OCI-LY7 (cell line): ENCODE measurements at regions of chr10 and their contacts with region 1.

Region 1: DNA sequence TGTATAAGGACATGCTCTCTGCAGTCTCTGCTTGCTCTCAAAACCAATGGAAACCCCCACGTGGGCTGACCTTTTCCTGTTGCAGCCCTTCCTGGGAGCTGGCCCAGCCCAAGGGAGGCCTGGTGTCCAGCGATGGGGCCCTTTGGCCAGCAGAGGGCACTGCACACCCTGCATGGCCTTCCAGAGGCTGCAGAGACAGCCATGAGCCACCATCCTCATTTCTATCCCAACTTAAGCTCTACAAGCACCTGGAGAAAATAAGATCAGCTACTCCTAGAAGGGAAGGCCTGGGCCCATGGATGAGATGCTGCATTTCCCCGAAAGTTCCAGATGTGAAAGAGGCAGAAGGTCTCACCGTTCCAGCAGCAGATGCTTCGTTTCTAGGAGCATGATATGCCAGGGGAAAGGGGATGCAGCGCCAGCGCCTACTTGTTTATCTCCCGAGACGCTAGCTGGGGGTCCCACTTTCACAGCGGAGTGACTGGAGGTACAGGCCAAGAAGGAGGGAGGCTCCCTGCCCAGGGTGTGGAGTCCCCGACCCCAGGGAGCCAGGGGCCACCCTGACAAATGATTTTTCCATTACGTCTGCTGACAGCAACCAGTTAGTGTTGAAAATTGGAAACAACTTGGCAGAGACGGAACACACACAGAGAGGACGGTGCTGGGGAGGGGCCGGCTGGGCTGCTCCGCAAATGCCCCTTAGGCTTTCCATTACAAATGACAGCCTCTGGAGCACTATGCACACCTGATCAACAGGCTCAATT is 106.4 kb downstream of the ZRANB1 start:
- DNase-seq: peak; percentile 74
- H3K4me3 ChIP-seq: no peak overlapping the region
- H3K27ac ChIP-seq: no peak overlapping the region
- H3K4me1 ChIP-seq: no peaks in the 10 kb centered on the region
- CTCF ChIP-seq: peak; percentile 92

Region 2: DNA sequence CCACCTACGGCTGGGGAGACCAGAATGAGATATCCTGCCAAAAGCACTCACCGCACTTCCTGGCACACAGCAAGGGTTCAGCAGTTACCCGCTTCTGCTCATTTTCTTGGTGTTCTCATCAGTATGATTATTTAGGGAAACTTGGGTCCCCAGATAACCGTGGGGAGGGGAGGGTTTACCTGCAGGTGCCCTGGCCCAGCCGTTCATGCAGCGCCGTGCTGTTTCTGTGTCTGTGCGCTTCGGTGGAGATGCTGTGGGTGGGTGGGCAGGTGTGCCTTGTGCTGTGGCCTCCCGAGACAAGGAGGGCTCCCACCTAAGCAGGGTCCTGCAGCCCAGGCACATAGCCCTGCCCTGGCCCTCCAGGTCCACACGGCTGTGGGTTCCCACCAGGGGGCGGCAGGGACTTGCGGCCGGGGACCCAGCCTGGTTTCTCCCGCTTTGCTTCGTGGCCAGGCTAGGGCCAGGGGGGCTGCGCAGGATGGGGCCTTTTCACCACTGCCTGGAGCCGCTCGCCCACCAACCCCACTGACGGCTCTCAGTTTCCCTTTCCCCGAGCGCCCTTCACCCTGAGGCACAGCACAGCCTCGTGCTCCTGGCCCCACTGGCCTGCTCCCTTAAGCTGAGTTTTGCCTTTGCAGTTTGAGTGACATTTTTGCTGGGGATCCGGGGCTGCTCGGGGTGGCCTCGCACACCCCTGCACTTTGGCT is 508.2 kb before region 1 on chr10:
- CTCF ChIA-PET with region 1: no interaction called
- POLR2A ChIA-PET with region 1: no interaction called
- intact Hi-C with region 1: no loop called
- DNase-seq: peak; percentile 96
- H3K4me3 ChIP-seq: peak overlapping the region; percentile 36
- H3K27ac ChIP-seq: peak overlapping the region; percentile 98
- H3K4me1 ChIP-seq: peaks cover 100% of the 10 kb centered on the region
- CTCF ChIP-seq: peak; percentile 71

Region 3: DNA sequence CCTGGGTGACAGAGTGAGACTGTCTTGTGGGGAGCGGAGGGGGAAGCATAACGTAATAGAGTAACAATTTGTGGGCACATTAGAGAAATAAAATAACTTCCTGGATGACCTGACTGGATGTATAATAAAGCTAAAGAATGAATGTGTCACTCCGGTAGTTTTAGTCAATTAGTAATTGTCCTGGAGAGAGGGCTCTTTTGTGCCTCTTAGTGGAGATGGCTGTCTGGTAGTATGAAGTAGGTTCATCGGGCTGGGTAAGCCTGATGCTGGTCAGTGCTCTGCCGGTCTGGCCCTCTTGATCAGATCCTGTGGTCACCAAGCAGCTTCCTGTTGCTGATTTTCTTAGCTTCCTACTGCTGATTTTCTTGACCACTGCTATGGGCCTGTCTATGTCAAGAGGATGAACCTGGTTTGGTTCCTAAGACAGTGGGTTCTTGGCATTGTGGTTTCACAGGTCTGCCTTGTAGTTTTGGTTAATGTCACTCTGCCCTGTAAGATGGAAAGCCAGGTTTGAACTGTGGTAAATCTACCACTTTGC is 72.2 kb before region 1 on chr10:
- CTCF ChIA-PET with region 1: no interaction called
- POLR2A ChIA-PET with region 1: no interaction called
- intact Hi-C with region 1: no loop called
- DNase-seq: no peak
- H3K4me3 ChIP-seq: no peak overlapping the region
- H3K27ac ChIP-seq: no peak overlapping the region
- H3K4me1 ChIP-seq: peaks cover 3% of the 10 kb centered on the region
- CTCF ChIP-seq: no peak

Region 4: DNA sequence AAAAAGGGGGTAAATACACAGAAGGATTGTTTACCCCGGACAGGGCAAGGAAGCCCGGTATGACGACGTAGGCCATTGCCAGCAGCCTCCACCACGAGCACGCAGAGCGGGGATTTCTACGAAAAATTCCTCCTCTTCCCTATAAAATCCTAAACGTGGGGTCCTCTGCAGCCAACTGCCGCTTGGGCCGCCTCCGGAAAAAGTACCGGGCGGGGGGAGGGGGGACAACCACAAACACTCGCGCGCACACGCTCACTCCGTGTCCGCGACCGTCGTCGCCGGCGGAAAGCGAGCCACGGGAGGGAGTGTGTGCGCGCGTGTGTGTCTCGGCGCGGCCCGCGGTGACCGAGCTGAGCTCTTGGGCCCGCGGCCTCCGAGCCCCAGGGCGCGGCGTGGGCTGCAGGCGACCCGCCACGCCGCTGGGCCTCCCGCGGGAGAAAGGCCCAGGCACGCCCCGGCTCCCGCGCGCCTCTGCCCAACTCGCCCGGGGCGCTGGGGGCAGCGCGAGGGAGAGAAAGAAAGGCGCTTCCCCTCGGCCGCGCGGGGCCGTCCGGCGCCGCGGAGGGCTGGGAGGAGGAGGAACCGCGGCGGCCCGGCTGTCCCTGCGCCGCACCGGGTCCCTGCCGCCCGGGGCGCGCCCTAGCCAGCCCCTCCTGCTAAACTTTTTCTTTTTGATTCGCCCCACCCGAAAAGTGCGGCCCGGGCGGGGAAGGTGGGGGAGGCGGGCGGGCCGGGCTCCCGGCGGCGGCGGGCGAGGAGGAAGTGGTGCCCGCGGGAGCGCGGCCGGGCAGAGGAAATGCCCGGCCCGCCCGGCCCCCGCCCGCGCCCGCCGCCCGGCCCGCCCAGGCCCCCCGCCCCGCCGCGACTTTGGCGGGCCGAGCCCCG is 110.6 kb after region 1 on chr10:
- CTCF ChIA-PET with region 1: no interaction called
- POLR2A ChIA-PET with region 1: interaction called, 3 read pairs
- intact Hi-C with region 1: loop called (anchors 10 kb)
- DNase-seq: no peak
- H3K4me3 ChIP-seq: no peak overlapping the region
- H3K27ac ChIP-seq: no peak overlapping the region
- H3K4me1 ChIP-seq: no peaks in the 10 kb centered on the region
- CTCF ChIP-seq: no peak

Region 5: DNA sequence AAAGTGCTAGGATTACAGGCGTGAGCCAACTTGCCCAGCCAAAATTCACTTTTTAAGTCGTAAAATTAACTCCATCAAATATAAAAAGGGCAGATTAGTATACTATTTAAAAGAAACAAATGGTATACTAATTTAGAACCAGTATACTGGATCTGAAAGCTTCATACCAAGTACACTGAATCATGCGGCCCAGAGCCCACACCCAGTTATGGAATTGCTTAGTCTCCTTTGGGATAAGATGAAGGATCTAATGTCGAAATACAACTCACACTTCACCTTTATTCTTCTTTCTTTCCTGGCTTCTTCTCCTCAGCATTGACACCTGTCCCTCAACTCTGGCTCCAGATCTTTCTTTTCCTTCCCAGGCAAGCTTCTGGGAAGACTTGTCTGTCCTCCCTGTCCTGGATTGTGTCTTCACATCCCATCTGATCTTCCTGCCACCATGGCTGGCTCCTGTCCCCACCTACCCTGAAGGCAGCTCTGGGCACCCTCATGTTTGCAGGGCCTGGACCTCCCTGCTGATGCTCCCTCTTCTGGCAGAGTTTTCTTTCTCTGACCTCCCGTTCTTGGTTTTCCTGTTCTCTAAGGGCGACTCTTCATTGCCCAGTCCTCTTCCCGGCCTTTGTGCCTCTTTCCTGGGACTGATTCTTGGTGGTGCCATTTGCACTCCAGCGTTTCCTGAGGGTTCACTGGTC is 169.8 kb after region 1 on chr10:
- CTCF ChIA-PET with region 1: no interaction called
- POLR2A ChIA-PET with region 1: no interaction called
- intact Hi-C with region 1: loop called (anchors 5 kb)
- DNase-seq: no peak
- H3K4me3 ChIP-seq: no peak overlapping the region
- H3K27ac ChIP-seq: no peak overlapping the region
- H3K4me1 ChIP-seq: peaks cover 5% of the 10 kb centered on the region
- CTCF ChIP-seq: peak; percentile 37; the same call in 1 of the 2 replicates

Region 6: DNA sequence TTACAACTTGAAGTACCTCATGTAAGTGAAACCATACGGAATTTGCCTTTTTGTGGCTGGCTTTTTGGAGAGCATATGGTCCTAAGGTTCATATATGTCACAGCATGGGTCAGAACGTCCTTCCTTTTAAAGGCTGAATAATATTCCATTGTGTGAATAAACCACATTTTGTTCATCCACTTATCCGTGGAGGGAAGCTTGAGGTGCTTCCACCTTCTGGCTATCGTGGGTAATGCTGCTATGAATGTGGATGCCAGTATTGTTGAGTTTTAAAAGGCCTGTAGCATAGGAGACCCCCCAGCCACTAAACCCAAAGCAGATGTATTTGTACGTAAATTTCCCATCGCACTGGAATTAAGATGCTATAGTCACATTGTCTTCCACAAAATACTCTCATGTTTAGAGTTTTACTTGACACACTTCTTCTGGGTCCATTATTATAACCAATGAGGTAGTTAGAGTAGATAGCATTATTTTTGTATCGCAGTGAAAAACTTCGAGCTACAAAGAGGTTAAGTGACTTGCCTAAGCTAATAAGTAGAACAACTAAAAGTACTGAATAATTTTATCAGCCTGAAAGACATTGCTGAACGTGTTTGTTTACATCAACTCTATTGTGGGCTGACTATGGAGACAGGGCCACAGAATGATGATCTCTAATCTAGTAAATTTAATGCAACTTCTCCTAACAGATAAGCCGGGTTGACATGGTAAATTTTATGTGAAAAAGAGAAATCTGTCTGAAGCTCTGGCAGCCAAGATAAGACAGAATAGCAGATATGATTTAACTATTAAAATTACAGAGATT is 295.0 kb after region 1 on chr10:
- CTCF ChIA-PET with region 1: no interaction called
- POLR2A ChIA-PET with region 1: no interaction called
- intact Hi-C with region 1: loop called (anchors 1 kb)
- DNase-seq: peak; percentile 20
- H3K4me3 ChIP-seq: no peak overlapping the region
- H3K27ac ChIP-seq: no peak overlapping the region
- H3K4me1 ChIP-seq: no peaks in the 10 kb centered on the region
- CTCF ChIP-seq: peak; percentile 77

Region 7: DNA sequence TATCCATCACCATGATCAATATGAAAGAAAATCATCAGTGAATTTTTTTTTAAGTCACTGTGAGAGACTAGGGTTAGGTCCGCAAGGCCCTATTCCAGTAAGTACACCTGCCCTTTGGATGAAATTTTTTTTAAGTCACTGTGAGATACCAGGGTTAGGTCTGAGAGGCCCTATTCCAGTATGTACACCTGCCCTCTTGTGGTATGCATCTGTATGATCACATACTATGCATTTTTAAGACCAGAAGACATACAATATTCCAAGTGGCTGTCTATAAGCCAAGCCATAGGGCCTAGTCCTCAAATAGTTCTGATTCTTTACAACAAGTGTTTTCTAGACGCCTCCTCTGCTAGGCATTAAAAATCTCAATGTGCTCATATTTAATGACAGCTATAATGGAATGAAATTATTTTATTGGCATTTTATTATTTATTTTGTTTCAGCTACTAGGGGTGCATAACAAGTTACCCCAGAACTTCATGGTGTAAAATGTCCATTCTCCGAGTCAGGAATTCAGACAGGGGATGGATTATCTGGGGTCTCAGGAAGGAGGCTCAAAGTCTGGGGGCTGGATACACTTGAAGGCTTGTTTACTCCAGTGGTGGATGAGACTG is 581.6 kb after region 1 on chr10:
- CTCF ChIA-PET with region 1: no interaction called
- POLR2A ChIA-PET with region 1: no interaction called
- intact Hi-C with region 1: loop called (anchors 5 kb)
- DNase-seq: peak; percentile 49
- H3K4me3 ChIP-seq: no peak overlapping the region
- H3K27ac ChIP-seq: no peak overlapping the region
- H3K4me1 ChIP-seq: no peaks in the 10 kb centered on the region
- CTCF ChIP-seq: peak; percentile 79